Activated CD4-positive, alpha-beta memory T cell treated with anti-CD3 and anti-CD28 coated beads for 36 hours (primary cell): ENCODE measurements at regions of chr4 and their contacts with region 1.

Region 1: DNA sequence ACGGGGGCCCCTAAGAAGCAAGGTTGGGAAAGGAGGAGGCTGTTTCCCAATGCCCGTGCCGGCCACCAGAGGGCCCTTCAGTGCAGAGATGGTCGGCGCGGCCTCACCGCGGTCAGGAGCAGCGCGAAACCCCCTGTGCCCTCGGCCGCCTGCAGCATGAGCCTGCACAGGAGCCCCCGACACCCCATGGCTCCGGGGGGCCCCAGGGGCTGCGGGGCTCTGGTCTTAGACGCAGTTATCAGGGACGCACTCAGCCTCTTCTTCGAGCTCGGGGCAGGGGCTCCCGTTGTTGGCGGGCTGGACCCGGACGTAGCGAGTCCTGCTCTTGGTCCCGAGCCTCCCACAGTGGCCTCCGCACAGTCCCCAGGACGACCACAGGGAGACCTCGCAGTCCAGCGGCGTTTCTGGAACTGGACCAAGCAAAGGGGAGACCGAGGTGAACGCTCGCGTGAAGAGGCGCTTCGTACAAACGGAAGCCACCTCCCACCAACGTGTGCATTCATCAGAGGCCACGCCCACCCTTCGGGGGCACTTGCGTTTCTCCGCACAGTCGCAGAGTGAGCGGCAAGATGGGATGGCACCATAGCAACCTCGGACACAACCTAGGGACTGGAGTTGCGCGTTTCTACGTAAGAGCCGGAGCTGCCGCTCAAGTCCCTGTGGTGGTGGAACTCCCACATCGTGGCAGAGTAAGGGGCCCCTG is 5.0 kb downstream of the SPON2 start:
- DNase-seq: peak; percentile 94
- H3K4me3 Mint-ChIP-seq: peak overlapping the region; percentile 74
- H3K27ac Mint-ChIP-seq: no peak overlapping the region
- H3K4me1 Mint-ChIP-seq: peaks cover 17% of the 10 kb centered on the region
- H3K27me3 Mint-ChIP-seq: peaks cover 12% of the 10 kb centered on the region

Region 2: GRCh38 chr4:1130316-1131186 is 36.8 kb before region 1 on chr4:
- CTCF ChIA-PET with region 1: interaction called, 14 read pairs
- POLR2A ChIA-PET with region 1: no interaction called
- intact Hi-C with region 1: loop called (anchors 2 kb)
- DNase-seq: peak; percentile 81
- H3K4me3 Mint-ChIP-seq: no peak overlapping the region
- H3K27ac Mint-ChIP-seq: no peak overlapping the region
- H3K4me1 Mint-ChIP-seq: no peaks in the 10 kb centered on the region
- H3K27me3 Mint-ChIP-seq: peaks cover 2% of the 10 kb centered on the region

Region 3: DNA sequence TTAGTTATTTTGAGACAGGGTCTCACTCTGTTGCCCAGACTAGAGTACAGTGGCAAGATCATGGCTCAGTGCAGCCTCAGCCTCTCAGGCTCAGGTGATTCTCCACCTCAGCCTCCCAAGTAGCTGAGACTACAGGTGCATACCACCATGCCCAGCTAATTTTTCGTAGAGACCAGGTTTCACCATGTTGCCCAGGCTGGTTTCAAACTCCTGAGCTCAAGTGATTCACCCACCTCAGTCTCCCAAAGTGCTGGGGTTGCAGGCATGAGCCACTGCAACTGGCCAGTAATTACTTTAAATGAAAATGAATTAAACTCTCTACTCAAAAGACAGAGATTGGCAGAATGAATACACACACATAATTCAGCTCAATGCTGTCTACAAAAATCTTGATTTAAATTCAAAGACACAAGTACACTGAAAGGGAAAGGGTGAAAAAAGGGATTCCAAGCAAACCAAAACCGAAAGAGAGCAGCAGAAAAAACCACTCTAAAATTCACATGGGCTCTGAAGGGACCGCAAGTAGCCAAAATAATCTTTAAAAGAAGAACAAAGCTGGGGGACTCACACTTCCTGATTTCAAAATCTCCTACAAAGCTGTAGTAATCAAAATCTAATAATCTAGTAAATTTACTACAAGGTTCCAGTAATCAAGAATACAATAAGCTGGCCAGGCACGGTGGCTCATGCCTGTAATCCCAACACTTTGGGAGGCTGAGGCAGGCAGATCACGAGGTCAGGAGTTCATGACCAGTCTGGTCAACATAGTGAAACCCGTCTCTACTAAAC is 16.8 kb after region 1 on chr4:
- CTCF ChIA-PET with region 1: interaction called, 16 read pairs
- POLR2A ChIA-PET with region 1: no interaction called
- intact Hi-C with region 1: no loop called
- DNase-seq: no peak
- H3K4me3 Mint-ChIP-seq: no peak overlapping the region
- H3K27ac Mint-ChIP-seq: peak overlapping the region; percentile 49
- H3K4me1 Mint-ChIP-seq: peaks cover 13% of the 10 kb centered on the region
- H3K27me3 Mint-ChIP-seq: peaks cover 9% of the 10 kb centered on the region

Region 4: GRCh38 chr4:1200425-1201035 is 33.1 kb after region 1 on chr4:
- CTCF ChIA-PET with region 1: interaction called, 14 read pairs
- POLR2A ChIA-PET with region 1: interaction called, 6 read pairs
- intact Hi-C with region 1: loop called (anchors 1 kb)
- DNase-seq: peak; percentile 40
- H3K4me3 Mint-ChIP-seq: peak overlapping the region; percentile 67
- H3K27ac Mint-ChIP-seq: peak overlapping the region; percentile 97
- H3K4me1 Mint-ChIP-seq: peaks cover 33% of the 10 kb centered on the region
- H3K27me3 Mint-ChIP-seq: no peaks in the 10 kb centered on the region

Region 5: GRCh38 chr4:1249148-1249730 is 81.8 kb after region 1 on chr4:
- CTCF ChIA-PET with region 1: interaction called, 14 read pairs
- POLR2A ChIA-PET with region 1: interaction called, 6 read pairs
- intact Hi-C with region 1: loop called (anchors 1 kb)
- DNase-seq: peak; percentile 85
- H3K4me3 Mint-ChIP-seq: peak overlapping the region; percentile 85
- H3K27ac Mint-ChIP-seq: peak overlapping the region; percentile 96
- H3K4me1 Mint-ChIP-seq: peaks cover 69% of the 10 kb centered on the region
- H3K27me3 Mint-ChIP-seq: no peaks in the 10 kb centered on the region

Region 6: GRCh38 chr4:1351854-1352633 is 184.6 kb after region 1 on chr4:
- CTCF ChIA-PET with region 1: interaction called, 4 read pairs
- POLR2A ChIA-PET with region 1: interaction called, 3 read pairs
- intact Hi-C with region 1: loop called (anchors 1 kb)
- DNase-seq: peak; percentile 94
- H3K4me3 Mint-ChIP-seq: no peak overlapping the region
- H3K27ac Mint-ChIP-seq: peak overlapping the region; percentile 20
- H3K4me1 Mint-ChIP-seq: peaks cover 31% of the 10 kb centered on the region
- H3K27me3 Mint-ChIP-seq: no peaks in the 10 kb centered on the region

Region 7: GRCh38 chr4:1377226-1377605 is 209.8 kb after region 1 on chr4:
- CTCF ChIA-PET with region 1: no interaction called
- POLR2A ChIA-PET with region 1: no interaction called
- intact Hi-C with region 1: no loop called
- DNase-seq: no peak
- H3K4me3 Mint-ChIP-seq: no peak overlapping the region
- H3K27ac Mint-ChIP-seq: no peak overlapping the region
- H3K4me1 Mint-ChIP-seq: no peaks in the 10 kb centered on the region
- H3K27me3 Mint-ChIP-seq: no peaks in the 10 kb centered on the region

Region 8: DNA sequence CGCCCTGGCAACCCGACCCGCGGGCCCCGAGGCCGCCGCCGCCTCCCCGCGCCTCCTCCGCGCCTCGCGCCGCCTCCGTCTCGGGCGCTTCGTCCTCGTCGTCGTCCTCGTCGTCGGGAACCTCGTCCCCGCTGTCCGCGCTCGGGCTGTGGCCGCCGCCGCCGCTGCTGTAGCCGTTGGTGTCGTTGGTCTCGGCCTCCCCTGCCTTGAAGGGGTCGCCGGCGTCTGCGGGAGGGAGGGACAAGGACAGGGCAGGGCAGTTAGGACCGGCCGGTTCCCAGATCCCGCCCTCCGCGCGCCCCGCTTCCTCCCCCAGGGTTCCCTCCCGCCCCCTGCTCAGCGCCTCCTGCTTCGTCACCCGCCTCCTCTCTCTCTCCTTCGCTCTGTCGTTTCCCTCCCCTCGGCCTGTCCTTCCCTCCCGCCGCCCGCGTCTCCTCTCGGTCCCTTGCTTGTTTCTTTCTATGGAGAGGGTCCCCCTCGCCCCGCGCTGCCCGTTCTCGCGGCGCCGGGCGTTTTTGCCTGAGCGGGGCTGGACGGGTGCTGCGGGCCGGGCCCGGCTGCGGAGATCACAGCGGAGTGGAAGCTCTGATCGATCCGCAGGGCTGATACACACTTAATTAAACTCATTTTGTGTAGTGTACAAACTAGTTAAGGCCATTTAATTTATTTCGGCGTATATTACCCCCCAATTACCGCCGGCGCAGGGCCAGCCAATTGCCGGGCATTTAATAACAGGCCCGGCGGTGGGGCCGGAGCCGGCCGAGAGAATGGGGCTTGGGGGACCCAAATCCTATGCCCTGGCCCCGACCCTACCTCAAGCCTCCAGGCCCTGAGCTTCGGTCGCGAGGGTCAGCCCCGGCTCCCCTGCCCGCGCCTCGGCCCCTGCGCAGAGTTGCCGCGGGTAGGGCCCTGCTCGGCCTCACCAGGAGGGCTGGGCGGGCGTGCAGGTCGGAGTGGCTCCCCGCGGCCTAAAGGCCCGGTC is 236.5 kb after region 1 on chr4:
- CTCF ChIA-PET with region 1: no interaction called
- POLR2A ChIA-PET with region 1: no interaction called
- intact Hi-C with region 1: no loop called
- DNase-seq: no peak
- H3K4me3 Mint-ChIP-seq: no peak overlapping the region
- H3K27ac Mint-ChIP-seq: no peak overlapping the region
- H3K4me1 Mint-ChIP-seq: peaks cover 2% of the 10 kb centered on the region
- H3K27me3 Mint-ChIP-seq: peaks cover 46% of the 10 kb centered on the region